Caco-2 (cell line): ENCODE measurements at regions of chr21 and their contacts with region 1.

Region 1: DNA sequence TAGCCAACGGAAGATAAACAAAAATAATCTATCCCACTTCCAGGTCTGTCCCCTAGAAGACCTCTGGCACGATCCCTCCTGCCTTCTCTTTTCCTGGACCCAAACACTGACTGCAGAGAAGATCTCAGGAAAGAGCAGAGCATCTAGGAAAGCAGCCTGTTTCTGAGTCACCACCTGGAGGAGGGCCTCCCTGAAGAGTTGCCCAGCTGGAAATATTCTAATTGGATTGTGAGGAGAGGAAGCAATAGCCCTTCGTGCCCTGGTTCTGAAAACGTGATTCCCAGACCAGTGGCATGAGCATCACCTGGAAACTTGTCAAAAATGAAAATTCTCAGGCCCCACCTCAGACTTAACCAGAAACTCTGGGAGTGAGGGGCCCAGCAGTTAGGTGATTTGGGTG is 411.1 kb downstream of the SETD4 start:
- DNase-seq: no peak
- H3K4me3 ChIP-seq: no peak overlapping the region
- H3K4me3 Mint-ChIP-seq: no peak overlapping the region
- H3K27ac Mint-ChIP-seq: no peak overlapping the region
- H3K4me1 ChIP-seq: no peaks in the 10 kb centered on the region
- H3K4me1 Mint-ChIP-seq: no peaks in the 10 kb centered on the region
- H3K27me3 ChIP-seq: no peaks in the 10 kb centered on the region; the same call in 1 of the 2 replicates
- H3K27me3 Mint-ChIP-seq: peaks cover 11% of the 10 kb centered on the region
- CTCF ChIP-seq: no peak

Region 2: DNA sequence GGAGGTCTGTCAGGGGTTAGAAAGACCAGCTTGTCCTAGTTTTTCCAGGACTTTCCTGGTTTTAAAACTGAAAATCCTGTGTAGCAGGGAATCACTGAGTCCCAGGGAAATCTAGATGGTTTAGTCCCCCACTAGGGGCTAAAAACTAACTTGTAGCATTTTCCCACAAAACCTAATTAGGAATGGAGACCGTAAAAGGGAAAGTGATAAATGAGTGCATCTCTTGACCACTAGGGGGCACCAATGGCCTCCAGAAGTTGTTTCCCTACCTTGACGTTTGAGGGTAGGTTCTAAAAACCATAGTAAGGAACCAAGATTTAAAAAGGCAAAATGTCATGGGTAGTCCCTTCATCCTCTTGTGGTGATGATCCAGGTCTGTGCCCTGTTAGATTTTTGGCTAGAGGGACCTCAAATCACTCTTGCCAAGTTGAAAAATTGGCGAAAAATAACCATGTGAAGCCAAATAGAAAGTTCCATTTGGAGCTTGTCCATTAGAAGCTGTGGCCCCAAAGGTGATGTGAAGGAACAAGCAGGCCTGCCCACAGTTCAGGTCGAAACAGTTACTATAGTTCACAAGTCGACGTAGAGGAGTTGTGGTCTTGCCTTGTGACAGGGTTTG is 955.9 kb before region 1 on chr21:
- CTCF ChIA-PET with region 1: interaction called, 10 read pairs
- POLR2A ChIA-PET with region 1: no interaction called
- intact Hi-C with region 1: no loop called
- DNase-seq: peak in 1 of 2 experiments; percentile 51
- H3K4me3 ChIP-seq: no peak overlapping the region
- H3K4me3 Mint-ChIP-seq: no peak overlapping the region
- H3K27ac Mint-ChIP-seq: no peak overlapping the region
- H3K4me1 ChIP-seq: 0 out of 2 replicates have a peak, but pooled peaks cover 13% of the 10 kb centered on the region
- H3K4me1 Mint-ChIP-seq: peaks cover 12% of the 10 kb centered on the region
- H3K27me3 ChIP-seq: no peaks in the 10 kb centered on the region
- H3K27me3 Mint-ChIP-seq: no peaks in the 10 kb centered on the region
- CTCF ChIP-seq: peak; percentile 45 to 83